Activated CD4-positive, alpha-beta memory T cell treated with anti-CD3 and anti-CD28 coated beads for 36 hours (primary cell): ENCODE measurements at regions of chr19 and their contacts with region 1.

Region 1: DNA sequence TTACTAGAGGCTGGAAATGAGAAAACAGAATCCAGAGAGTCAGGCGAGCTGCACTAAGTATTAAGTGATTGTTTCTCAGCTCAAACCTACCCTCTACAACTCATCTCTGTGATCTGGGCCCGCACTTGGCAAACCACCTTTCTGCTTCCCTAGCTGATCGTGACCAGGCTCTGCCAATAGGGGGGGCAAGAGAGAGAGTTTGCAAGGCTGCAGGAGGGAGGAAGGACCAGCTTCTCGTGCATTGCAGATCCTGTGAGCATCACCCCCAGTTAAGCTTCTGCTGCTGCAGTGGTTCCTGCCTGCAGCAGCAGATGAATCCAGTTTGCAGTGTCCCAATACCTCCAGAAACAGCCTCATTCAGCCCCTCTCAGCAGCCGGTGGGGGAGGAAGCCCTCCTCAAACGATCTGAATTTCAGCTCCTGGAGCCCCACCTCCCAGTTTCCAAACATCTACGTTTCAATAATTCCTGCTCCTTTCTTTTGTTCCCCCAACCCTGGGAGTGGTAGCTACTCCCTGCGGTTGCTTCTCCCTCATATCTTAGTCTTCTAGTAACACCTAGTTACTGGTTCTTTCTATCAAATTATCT is 20.0 kb downstream of the XRCC1 start:
- DNase-seq: peak; percentile 87
- H3K4me3 Mint-ChIP-seq: no peak overlapping the region
- H3K27ac Mint-ChIP-seq: peak overlapping the region; percentile 38
- H3K4me1 Mint-ChIP-seq: peaks cover 9% of the 10 kb centered on the region
- H3K27me3 Mint-ChIP-seq: no peaks in the 10 kb centered on the region

Region 2: GRCh38 chr19:43446746-43447489 is 108.4 kb before region 1 on chr19:
- CTCF ChIA-PET with region 1: interaction called, 15 read pairs
- POLR2A ChIA-PET with region 1: no interaction called
- intact Hi-C with region 1: no loop called
- DNase-seq: peak; percentile 87
- H3K4me3 Mint-ChIP-seq: no peak overlapping the region
- H3K27ac Mint-ChIP-seq: no peak overlapping the region
- H3K4me1 Mint-ChIP-seq: peaks cover 16% of the 10 kb centered on the region
- H3K27me3 Mint-ChIP-seq: no peaks in the 10 kb centered on the region

Region 3: GRCh38 chr19:43474986-43475705 is 80.1 kb before region 1 on chr19:
- CTCF ChIA-PET with region 1: no interaction called
- POLR2A ChIA-PET with region 1: no interaction called
- intact Hi-C with region 1: no loop called
- DNase-seq: peak; percentile 96
- H3K4me3 Mint-ChIP-seq: peak overlapping the region; percentile 70
- H3K27ac Mint-ChIP-seq: peak overlapping the region; percentile 85
- H3K4me1 Mint-ChIP-seq: peaks cover 15% of the 10 kb centered on the region
- H3K27me3 Mint-ChIP-seq: no peaks in the 10 kb centered on the region

Region 4: DNA sequence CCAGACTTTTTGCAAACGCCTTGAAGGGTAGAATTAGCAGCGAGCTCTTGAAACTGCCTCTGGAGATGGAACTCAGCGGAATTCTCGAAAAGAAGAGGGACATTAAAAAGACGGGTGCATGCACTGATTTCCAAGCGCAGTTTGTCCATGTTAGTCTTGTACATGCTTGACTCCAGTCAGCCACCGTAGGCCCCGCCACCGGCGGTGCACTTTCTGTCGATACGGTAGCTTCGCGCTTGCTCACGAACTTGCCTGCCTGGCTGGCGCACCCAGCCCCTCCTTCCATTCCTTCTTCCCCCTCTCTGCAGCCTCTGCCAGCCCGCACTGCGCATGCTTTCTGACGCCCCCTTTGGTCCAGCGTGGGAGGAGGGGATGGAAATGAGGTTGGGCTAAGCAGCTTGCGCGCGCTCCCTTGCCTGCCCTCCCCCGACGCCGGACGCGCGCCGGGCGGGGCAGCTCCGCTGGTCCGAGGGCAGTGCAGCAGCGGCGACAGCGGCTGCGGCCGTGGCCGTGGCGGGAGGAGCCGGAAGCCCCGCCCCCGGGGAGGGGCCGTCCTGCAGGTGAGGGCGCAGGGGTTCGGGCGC is 22.2 kb before region 1 on chr19 and contains the start of gene ZNF575:
- CTCF ChIA-PET with region 1: interaction called, 79 read pairs
- POLR2A ChIA-PET with region 1: interaction called, 3 read pairs
- intact Hi-C with region 1: no loop called
- DNase-seq: peak; percentile 95
- H3K4me3 Mint-ChIP-seq: peak within 1 kb of the TSS; percentile 82
- H3K27ac Mint-ChIP-seq: peak within 1 kb of the TSS; percentile 94
- H3K4me1 Mint-ChIP-seq: peaks cover 21% of the 10 kb centered on the region
- H3K27me3 Mint-ChIP-seq: no peaks in the 10 kb centered on the region
- total RNA-seq, gene ZNF575: 3.1 to 3.7 TPM

Region 5: DNA sequence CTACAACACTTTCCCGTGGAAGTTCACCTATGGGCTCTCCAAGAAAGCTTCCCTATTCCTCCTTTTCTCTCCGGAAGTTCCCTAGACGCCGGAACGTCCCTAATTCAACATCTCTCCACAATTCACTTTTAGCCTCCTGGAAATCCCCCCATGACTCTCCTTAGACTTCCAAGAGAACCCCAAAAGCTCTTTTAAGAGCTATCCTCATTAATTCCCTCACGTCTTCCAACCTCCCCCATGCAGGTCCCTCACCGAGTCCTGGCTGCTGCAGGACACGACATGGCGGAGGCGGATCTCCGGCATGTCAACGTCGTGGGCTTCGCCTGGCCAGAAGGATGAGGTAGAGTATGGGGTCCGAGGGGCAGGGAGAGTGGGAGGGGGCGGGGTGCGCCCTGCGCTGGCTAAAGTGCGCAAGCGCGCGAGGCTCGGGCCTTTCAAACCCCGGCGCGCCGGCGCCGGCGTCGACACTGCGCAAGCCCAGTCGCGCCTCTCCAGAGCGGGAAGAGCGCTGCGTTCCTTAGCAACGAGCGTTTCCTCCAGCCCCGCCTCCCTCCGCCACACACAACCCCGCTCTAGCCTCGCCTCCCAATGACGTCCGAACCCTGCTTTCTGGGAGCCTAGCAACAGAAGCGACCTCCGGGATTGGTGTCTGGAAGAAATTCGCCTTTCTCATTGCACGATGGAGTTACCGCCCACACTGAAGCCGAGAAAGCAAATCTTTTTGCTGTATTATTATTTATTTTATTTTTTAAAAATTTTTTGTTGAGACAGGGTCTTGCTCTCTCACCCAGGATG is 20.1 kb after region 1 on chr19 and contains the starts of genes PINLYP and XRCC1:
- CTCF ChIA-PET with region 1: interaction called, 24 read pairs
- POLR2A ChIA-PET with region 1: no interaction called
- intact Hi-C with region 1: loop called (anchors 2 kb)
- DNase-seq: peak; percentile 98
- H3K4me3 Mint-ChIP-seq: peak within 1 kb of the TSS; percentile 96
- H3K27ac Mint-ChIP-seq: peak within 1 kb of the TSS; percentile 86
- H3K4me1 Mint-ChIP-seq: peaks cover 24% of the 10 kb centered on the region
- H3K27me3 Mint-ChIP-seq: no peaks in the 10 kb centered on the region
- total RNA-seq, gene PINLYP: 2.2 to 3.7 TPM
- total RNA-seq, gene XRCC1: 42.5 to 43.0 TPM

Region 6: DNA sequence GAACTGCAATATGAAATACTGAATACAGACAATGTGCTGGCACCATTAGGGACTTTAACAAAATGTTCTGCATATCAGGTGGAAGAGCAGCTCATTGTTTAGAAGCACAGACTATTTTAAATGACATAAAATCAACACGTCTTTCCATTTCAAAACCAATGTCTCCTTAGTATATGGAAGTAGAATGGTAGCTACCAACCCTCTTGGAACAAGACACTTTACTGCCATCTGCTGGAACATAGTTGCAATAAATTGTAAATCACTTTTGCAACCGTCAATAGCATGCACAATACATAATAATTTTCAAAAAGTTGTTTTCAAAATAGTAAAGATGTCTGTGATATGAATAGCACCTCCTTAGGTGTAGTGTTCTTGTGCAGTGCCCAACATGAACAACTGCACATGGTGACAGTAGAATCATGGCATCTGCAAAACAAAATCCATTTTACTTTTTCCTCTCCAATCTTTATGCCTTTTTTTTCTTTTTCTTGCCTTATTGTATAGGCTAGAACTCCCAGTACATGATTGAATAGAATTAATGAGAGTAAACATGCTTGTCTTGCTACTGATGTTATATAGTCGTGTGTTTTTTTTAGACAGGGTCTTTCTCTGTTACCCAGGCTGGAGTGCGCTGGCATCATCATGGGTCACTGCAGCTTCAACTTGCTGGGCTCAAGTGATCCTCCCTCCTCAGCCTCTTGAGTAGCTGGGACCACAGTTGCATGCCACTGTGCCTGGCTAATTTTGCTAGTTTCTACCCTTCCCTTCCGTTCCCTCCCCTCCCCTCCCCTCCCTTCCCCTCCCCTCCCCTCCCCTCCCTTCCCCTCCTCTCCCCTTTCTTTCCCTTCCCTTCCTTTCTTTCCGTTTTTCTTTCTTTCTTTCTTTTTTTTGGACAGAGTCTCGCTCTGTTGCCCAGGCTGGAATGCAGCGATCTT is 254.8 kb after region 1 on chr19:
- CTCF ChIA-PET with region 1: interaction called, 10 read pairs
- POLR2A ChIA-PET with region 1: no interaction called
- intact Hi-C with region 1: no loop called
- DNase-seq: no peak
- H3K4me3 Mint-ChIP-seq: no peak overlapping the region
- H3K27ac Mint-ChIP-seq: no peak overlapping the region
- H3K4me1 Mint-ChIP-seq: peaks cover 6% of the 10 kb centered on the region
- H3K27me3 Mint-ChIP-seq: peaks cover 4% of the 10 kb centered on the region